Activated CD8-positive, alpha-beta T cell treated with anti-CD3 and anti-CD28 coated beads for 36 hours (primary cell): ENCODE measurements at regions of chr15 and their contacts with region 1.

Region 1: GRCh38 chr15:85412956-85413854 is 32.8 kb downstream of the AKAP13 start:
- DNase-seq: peak; percentile 91
- ATAC-seq: peak; percentile 98
- H3K4me3 Mint-ChIP-seq: peak overlapping the region; percentile 40
- H3K27ac Mint-ChIP-seq: peak overlapping the region; percentile 79
- H3K4me1 Mint-ChIP-seq: peaks cover 69% of the 10 kb centered on the region
- H3K27me3 Mint-ChIP-seq: no peaks in the 10 kb centered on the region
- CTCF ChIP-seq: no peak

Region 2: DNA sequence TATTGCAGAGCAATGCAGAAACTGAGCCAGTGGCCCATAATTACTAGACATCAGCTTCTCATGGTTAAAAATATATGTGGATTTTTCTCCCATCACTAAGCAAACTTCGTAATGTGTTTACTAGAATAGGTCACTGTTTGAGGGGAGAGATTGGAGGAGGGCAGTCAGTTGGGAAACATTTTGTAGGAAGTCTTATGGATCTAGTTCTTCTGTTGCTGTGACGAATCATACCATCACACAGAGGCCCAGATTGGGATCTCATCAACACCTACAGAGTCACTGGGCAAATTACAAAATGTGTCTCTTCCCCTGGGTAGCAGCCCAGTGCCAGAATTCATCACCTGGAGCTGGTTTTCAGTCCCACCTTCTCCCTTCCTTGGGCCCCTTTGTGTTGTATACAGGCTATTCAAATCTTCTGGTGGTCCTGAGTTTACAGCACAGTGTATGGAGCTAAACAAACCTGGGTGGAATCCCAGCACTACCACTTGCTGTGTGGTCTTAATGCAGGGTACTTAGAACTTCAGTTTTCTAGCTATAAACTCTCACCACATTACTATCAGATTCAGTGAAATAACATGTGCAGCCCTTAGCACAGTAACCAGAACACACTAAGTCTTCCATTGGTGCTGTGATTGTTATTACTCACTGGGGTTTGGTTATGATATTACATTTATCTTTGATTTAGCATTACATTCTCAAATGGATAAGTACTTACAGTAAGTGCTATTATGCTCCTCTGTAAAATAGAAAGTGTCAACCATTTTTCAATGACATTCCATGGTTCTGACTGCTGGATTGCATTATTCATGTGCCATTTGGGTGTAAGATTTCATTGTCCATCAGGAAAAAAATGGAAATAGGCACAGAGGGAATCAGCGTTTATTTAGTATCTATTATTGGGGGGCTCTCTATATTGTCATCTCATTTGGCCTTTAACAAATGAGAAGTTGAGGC is 349.8 kb before region 1 on chr15:
- CTCF ChIA-PET with region 1: no interaction called
- POLR2A ChIA-PET with region 1: no interaction called
- intact Hi-C with region 1: no loop called
- DNase-seq: no peak
- ATAC-seq: peak; percentile 27
- H3K4me3 Mint-ChIP-seq: no peak overlapping the region
- H3K27ac Mint-ChIP-seq: no peak overlapping the region
- H3K4me1 Mint-ChIP-seq: peaks cover 10% of the 10 kb centered on the region
- H3K27me3 Mint-ChIP-seq: no peaks in the 10 kb centered on the region
- CTCF ChIP-seq: no peak

Region 3: GRCh38 chr15:85073556-85074194 is 339.5 kb before region 1 on chr15:
- CTCF ChIA-PET with region 1: no interaction called
- POLR2A ChIA-PET with region 1: no interaction called
- intact Hi-C with region 1: no loop called
- DNase-seq: peak; percentile 39
- ATAC-seq: peak; percentile 97
- H3K4me3 Mint-ChIP-seq: no peak overlapping the region
- H3K27ac Mint-ChIP-seq: peak overlapping the region; percentile 55
- H3K4me1 Mint-ChIP-seq: peaks cover 14% of the 10 kb centered on the region
- H3K27me3 Mint-ChIP-seq: no peaks in the 10 kb centered on the region
- CTCF ChIP-seq: no peak

Region 4: DNA sequence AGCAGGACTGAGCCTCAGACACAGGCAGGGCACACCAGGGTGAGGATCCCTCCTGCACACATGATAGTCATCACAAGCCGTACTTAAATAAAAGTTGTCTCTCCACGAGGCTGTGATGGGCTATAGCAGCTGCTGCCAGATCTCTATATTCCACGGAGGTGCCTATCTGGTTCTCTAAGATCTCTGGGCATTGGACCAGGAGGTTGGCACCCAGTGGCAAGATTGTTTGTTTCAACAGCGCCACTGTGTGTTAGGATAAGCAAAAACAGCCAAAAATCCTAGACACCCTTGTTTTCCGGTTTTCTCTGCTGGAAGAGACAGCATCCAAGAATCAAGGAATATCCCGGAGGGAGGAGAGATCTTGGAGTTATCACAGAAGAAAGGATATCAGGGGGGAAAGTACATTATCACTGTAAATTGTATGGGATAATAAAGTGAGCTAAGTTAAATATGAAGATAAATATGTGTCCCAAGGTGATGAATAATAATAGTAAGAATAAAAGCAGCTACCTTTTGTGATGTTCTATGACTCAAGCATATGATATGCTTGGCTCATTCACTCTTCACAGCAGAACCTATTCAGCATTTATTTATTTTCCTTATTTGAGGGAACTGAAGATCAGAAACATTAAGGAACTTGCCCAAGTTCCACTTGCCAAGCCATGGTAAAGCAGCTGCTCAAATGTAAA is 123.4 kb before region 1 on chr15:
- CTCF ChIA-PET with region 1: interaction called, 90 read pairs
- POLR2A ChIA-PET with region 1: no interaction called
- intact Hi-C with region 1: no loop called
- DNase-seq: peak; percentile 25
- ATAC-seq: peak; percentile 67
- H3K4me3 Mint-ChIP-seq: no peak overlapping the region
- H3K27ac Mint-ChIP-seq: no peak overlapping the region
- H3K4me1 Mint-ChIP-seq: no peaks in the 10 kb centered on the region
- H3K27me3 Mint-ChIP-seq: peaks cover 4% of the 10 kb centered on the region
- CTCF ChIP-seq: peak; percentile 52

Region 5: GRCh38 chr15:85318048-85318731 is 95.0 kb before region 1 on chr15:
- CTCF ChIA-PET with region 1: interaction called, 32 read pairs
- POLR2A ChIA-PET with region 1: interaction called, 4 read pairs
- intact Hi-C with region 1: loop called (anchors 5 kb)
- DNase-seq: peak; percentile 75
- ATAC-seq: peak; percentile 88
- H3K4me3 Mint-ChIP-seq: peak overlapping the region; percentile 12
- H3K27ac Mint-ChIP-seq: peak overlapping the region; percentile 85
- H3K4me1 Mint-ChIP-seq: peaks cover 54% of the 10 kb centered on the region
- H3K27me3 Mint-ChIP-seq: no peaks in the 10 kb centered on the region
- CTCF ChIP-seq: no peak

Region 6: GRCh38 chr15:85430406-85431204 is 17.4 kb after region 1 on chr15:
- CTCF ChIA-PET with region 1: interaction called, 13 read pairs
- POLR2A ChIA-PET with region 1: interaction called, 4 read pairs
- intact Hi-C with region 1: no loop called
- DNase-seq: peak; percentile 37
- ATAC-seq: peak; percentile 96
- H3K4me3 Mint-ChIP-seq: no peak overlapping the region
- H3K27ac Mint-ChIP-seq: no peak overlapping the region
- H3K4me1 Mint-ChIP-seq: peaks cover 54% of the 10 kb centered on the region
- H3K27me3 Mint-ChIP-seq: no peaks in the 10 kb centered on the region
- CTCF ChIP-seq: no peak

Region 7: GRCh38 chr15:85498471-85498870 is 85.3 kb after region 1 on chr15:
- CTCF ChIA-PET with region 1: no interaction called
- POLR2A ChIA-PET with region 1: no interaction called
- intact Hi-C with region 1: no loop called
- DNase-seq: no peak
- ATAC-seq: no peak
- H3K4me3 Mint-ChIP-seq: no peak overlapping the region
- H3K27ac Mint-ChIP-seq: no peak overlapping the region
- H3K4me1 Mint-ChIP-seq: peaks cover 68% of the 10 kb centered on the region
- H3K27me3 Mint-ChIP-seq: no peaks in the 10 kb centered on the region
- CTCF ChIP-seq: no peak

Region 8: DNA sequence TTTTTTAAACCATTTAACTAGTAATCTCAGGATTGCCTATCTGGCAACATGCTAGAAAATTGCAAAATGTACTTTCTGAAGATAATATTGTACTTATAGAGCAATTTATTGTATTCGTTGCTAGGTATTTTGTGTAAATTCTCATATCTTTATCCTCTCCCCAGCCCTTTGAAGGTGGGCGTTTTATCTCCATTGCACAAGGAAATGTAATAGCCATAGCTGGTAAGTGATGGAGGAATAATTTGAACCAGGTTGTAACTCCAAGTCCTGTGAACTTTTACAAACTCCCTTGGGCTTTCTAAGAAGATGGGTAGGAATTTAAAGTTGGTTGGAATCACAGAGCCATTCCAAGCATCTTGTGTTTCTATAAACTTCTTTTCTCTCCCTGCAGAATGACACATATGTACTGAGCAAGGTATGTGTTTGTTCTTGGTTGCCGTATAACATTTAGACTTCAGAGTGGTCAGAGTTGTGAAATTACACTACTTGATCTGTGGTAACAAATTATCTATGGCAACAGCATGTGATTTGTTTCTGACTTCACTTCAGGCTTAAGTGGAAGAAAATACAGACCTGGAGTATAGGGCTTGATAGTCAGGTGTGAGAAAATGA is 138.1 kb after region 1 on chr15:
- CTCF ChIA-PET with region 1: no interaction called
- POLR2A ChIA-PET with region 1: no interaction called
- intact Hi-C with region 1: no loop called
- DNase-seq: no peak
- ATAC-seq: no peak
- H3K4me3 Mint-ChIP-seq: no peak overlapping the region
- H3K27ac Mint-ChIP-seq: no peak overlapping the region
- H3K4me1 Mint-ChIP-seq: peaks cover 55% of the 10 kb centered on the region
- H3K27me3 Mint-ChIP-seq: no peaks in the 10 kb centered on the region
- CTCF ChIP-seq: no peak